ENCODE measurements at regions of chr1 and their contacts with region 1.

Region 1: GRCh38 chr1:70277875-70278274 is 56.7 kb downstream of the SRSF11 start:
- DNase-seq: no peak
- ATAC-seq: no peak
- H3K4me3 ChIP-seq: no peak overlapping the region
- H3K27ac ChIP-seq: no peak overlapping the region
- H3K4me1 ChIP-seq: no peaks in the 10 kb centered on the region; the same call in 1 of the 2 replicates
- H3K27me3 ChIP-seq: no peaks in the 10 kb centered on the region
- CTCF ChIP-seq: no peak
- POLR2A ChIP-seq: no peak
- RAD21 ChIP-seq: no peak

Region 2: GRCh38 chr1:70034403-70034802 is 243.5 kb before region 1 on chr1:
- CTCF ChIA-PET with region 1: no interaction called
- POLR2A ChIA-PET with region 1: no interaction called
- dilution Hi-C with region 1: no loop called
- in situ Hi-C with region 1: no loop called
- intact Hi-C with region 1: no loop called
- DNase-seq: peak; percentile 77
- ATAC-seq: peak; percentile 79
- H3K4me3 ChIP-seq: no peak overlapping the region
- H3K27ac ChIP-seq: no peak overlapping the region
- H3K4me1 ChIP-seq: no peaks in the 10 kb centered on the region
- H3K27me3 ChIP-seq: no peaks in the 10 kb centered on the region; the same call in 1 of the 2 replicates
- CTCF ChIP-seq: peak; percentile 67
- POLR2A ChIP-seq: no peak
- RAD21 ChIP-seq: peak; percentile 77

Region 3: DNA sequence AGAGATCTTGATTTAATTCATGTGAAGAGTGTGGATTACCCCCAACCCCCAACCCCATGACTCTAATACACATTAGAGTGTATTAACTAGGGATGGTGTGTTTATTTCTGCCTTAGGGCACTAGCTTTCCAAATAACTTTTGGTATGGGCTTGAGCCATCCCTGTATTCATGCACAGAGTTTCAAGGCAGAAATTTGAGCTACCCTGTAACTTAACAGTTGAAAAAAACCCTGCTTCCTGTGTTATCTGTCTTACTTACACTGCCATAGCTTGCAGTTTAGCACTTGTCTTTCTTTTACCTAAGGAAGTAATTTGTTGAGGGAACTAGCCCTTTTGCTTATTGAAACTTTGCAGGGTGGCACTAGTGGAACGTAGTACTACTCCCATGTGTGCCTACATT is 50.4 kb before region 1 on chr1:
- CTCF ChIA-PET with region 1: no interaction called
- POLR2A ChIA-PET with region 1: interaction called, 3 read pairs
- dilution Hi-C with region 1: no loop called
- in situ Hi-C with region 1: no loop called
- intact Hi-C with region 1: loop called (anchors 1 kb)
- DNase-seq: peak; percentile 7
- ATAC-seq: peak; percentile 59
- H3K4me3 ChIP-seq: no peak overlapping the region
- H3K27ac ChIP-seq: no peak overlapping the region
- H3K4me1 ChIP-seq: peaks cover 4% of the 10 kb centered on the region
- H3K27me3 ChIP-seq: no peaks in the 10 kb centered on the region
- CTCF ChIP-seq: no peak
- POLR2A ChIP-seq: no peak
- RAD21 ChIP-seq: no peak

Region 4: DNA sequence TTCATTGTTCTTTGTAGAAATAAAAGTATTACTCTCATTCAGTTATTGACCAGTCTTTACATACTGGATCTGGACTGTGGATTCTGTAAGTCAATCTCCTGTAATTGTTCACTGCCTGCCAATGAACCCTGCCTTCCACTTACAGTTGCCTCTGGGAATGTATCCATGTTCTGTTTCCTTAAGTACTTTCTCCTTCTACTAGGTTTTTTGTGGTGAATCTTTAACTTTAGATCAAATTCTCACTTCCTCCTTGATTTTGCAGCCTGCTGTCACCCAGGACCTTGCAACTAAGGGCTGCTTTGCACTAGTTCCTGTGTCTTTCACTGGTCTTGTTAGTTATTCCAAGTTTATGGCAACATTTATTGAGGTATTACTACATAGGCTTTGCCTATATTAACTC is 104.8 kb after region 1 on chr1:
- CTCF ChIA-PET with region 1: no interaction called
- POLR2A ChIA-PET with region 1: interaction called, 12 read pairs
- dilution Hi-C with region 1: no loop called
- in situ Hi-C with region 1: no loop called
- intact Hi-C with region 1: no loop called
- DNase-seq: no peak
- ATAC-seq: no peak
- H3K4me3 ChIP-seq: no peak overlapping the region
- H3K27ac ChIP-seq: no peak overlapping the region
- H3K4me1 ChIP-seq: no peaks in the 10 kb centered on the region
- H3K27me3 ChIP-seq: no peaks in the 10 kb centered on the region
- CTCF ChIP-seq: no peak
- POLR2A ChIP-seq: no peak
- RAD21 ChIP-seq: no peak

Measured in IMR-90 (cell line).